ENCODE measurements at regions of chr7 and their contacts with region 1.

Region 1: GRCh38 chr7:142459551-142459963 is 201.7 kb upstream of the PRSS58 start:
- DNase-seq: peak; percentile 51
- ATAC-seq: peak; percentile 43
- H3K4me3 ChIP-seq: no peak overlapping the region
- H3K4me3 Mint-ChIP-seq: no peak overlapping the region
- H3K27ac ChIP-seq: no peak overlapping the region
- H3K27ac Mint-ChIP-seq: no peak overlapping the region
- H3K4me1 ChIP-seq: peaks cover 0 to 4% of the 10 kb centered on the region in 2 donors
- H3K4me1 Mint-ChIP-seq: no peaks in the 10 kb centered on the region
- H3K27me3 ChIP-seq: peaks cover 0 to 4% (median 2%) of the 10 kb centered on the region in 4 experiments
- H3K27me3 Mint-ChIP-seq: peaks cover 25% of the 10 kb centered on the region
- CTCF ChIP-seq: peak; percentile 78

Region 2: DNA sequence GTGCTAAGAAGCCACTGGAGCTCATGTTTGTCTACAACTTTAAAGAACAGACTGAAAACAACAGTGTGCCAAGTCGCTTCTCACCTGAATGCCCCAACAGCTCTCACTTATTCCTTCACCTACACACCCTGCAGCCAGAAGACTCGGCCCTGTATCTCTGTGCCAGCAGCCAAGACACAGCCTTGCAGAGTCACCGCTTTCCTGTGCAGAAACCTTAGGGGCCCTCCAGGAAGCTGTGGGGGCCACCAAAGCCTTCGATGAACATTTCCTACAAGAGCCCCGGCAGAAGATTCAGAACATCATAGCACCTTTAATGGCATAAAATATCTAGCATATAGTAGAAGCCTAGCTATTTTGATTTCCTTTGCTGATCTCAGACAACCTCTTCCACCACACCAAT is 113.7 kb before region 1 on chr7:
- CTCF ChIA-PET with region 1: no interaction called
- POLR2A ChIA-PET with region 1: no interaction called
- intact Hi-C with region 1: no loop called
- DNase-seq: no peak
- ATAC-seq: no peak
- H3K4me3 ChIP-seq: no peak overlapping the region
- H3K4me3 Mint-ChIP-seq: no peak overlapping the region
- H3K27ac ChIP-seq: no peak overlapping the region
- H3K27ac Mint-ChIP-seq: no peak overlapping the region
- H3K4me1 ChIP-seq: no peaks in the 10 kb centered on the region
- H3K4me1 Mint-ChIP-seq: no peaks in the 10 kb centered on the region
- H3K27me3 ChIP-seq: no peaks in the 10 kb centered on the region
- H3K27me3 Mint-ChIP-seq: peaks cover 10% of the 10 kb centered on the region
- CTCF ChIP-seq: no peak

Region 3: DNA sequence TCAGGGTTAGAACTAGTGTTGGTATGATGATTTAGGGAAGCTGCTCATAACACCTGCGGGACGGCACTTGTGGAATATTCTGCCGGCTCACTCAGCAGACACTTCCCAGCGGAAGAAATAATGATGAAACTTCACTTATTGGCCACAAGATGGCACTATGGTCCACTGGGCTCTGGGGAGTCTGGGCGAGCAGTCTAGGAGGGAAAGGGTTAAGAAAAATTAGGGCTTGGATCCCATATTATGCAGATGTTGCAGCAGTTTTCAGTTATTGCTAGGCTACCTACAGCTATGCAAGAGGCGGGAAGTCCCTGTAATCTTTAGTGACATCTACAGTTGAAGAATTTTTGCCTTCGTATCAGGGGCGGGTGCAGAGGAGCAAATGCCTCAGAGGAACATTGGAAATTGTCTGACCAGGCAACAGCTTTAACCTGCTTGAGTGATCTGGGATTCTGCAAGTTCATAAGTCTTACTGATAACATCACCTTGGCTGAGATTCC is 37.0 kb after region 1 on chr7:
- CTCF ChIA-PET with region 1: interaction called, 5 read pairs
- POLR2A ChIA-PET with region 1: no interaction called
- intact Hi-C with region 1: loop called (anchors 1 kb)
- DNase-seq: peak; percentile 41
- ATAC-seq: no peak
- H3K4me3 ChIP-seq: no peak overlapping the region
- H3K4me3 Mint-ChIP-seq: no peak overlapping the region
- H3K27ac ChIP-seq: no peak overlapping the region
- H3K27ac Mint-ChIP-seq: no peak overlapping the region
- H3K4me1 ChIP-seq: no peaks in the 10 kb centered on the region
- H3K4me1 Mint-ChIP-seq: peaks cover 7% of the 10 kb centered on the region
- H3K27me3 ChIP-seq: peaks cover 0 to 10% (median 3%) of the 10 kb centered on the region in 4 experiments
- H3K27me3 Mint-ChIP-seq: peaks cover 30% of the 10 kb centered on the region
- CTCF ChIP-seq: peak; percentile 75

Region 4: GRCh38 chr7:142587578-142588191 is 128.1 kb after region 1 on chr7:
- CTCF ChIA-PET with region 1: no interaction called
- POLR2A ChIA-PET with region 1: no interaction called
- intact Hi-C with region 1: no loop called
- DNase-seq: peak; percentile 40
- ATAC-seq: peak; percentile 57
- H3K4me3 ChIP-seq: no peak overlapping the region
- H3K4me3 Mint-ChIP-seq: no peak overlapping the region
- H3K27ac ChIP-seq: no peak overlapping the region
- H3K27ac Mint-ChIP-seq: no peak overlapping the region
- H3K4me1 ChIP-seq: no peaks in the 10 kb centered on the region
- H3K4me1 Mint-ChIP-seq: no peaks in the 10 kb centered on the region
- H3K27me3 ChIP-seq: no peaks in the 10 kb centered on the region
- H3K27me3 Mint-ChIP-seq: peaks cover 3% of the 10 kb centered on the region
- CTCF ChIP-seq: peak; percentile 36

Region 5: GRCh38 chr7:142626420-142627035 is 167.0 kb after region 1 on chr7:
- CTCF ChIA-PET with region 1: no interaction called
- POLR2A ChIA-PET with region 1: no interaction called
- intact Hi-C with region 1: no loop called
- DNase-seq: peak; percentile 71
- ATAC-seq: peak; percentile 66
- H3K4me3 ChIP-seq: no peak overlapping the region
- H3K4me3 Mint-ChIP-seq: no peak overlapping the region
- H3K27ac ChIP-seq: no peak overlapping the region
- H3K27ac Mint-ChIP-seq: no peak overlapping the region
- H3K4me1 ChIP-seq: no peaks in the 10 kb centered on the region
- H3K4me1 Mint-ChIP-seq: peaks cover 3% of the 10 kb centered on the region
- H3K27me3 ChIP-seq: peaks cover 0 to 16% (median 0%) of the 10 kb centered on the region in 4 experiments
- H3K27me3 Mint-ChIP-seq: peaks cover 36% of the 10 kb centered on the region
- CTCF ChIP-seq: peak; percentile 78

Measured in B cell (primary cell).